ENCODE measurements at regions of chr1 and their contacts with region 1.

Region 1: GRCh38 chr1:198794498-198794897 is 155.7 kb downstream of the PTPRC start:
- DNase-seq: no peak
- H3K4me3 ChIP-seq: no peak overlapping the region
- H3K27ac ChIP-seq: no peak overlapping the region
- H3K4me1 ChIP-seq: no peaks in the 10 kb centered on the region
- H3K27me3 ChIP-seq: no peaks in the 10 kb centered on the region
- CTCF ChIP-seq: no peak
- EP300 ChIP-seq: no peak
- POLR2A ChIP-seq: no peak

Region 2: DNA sequence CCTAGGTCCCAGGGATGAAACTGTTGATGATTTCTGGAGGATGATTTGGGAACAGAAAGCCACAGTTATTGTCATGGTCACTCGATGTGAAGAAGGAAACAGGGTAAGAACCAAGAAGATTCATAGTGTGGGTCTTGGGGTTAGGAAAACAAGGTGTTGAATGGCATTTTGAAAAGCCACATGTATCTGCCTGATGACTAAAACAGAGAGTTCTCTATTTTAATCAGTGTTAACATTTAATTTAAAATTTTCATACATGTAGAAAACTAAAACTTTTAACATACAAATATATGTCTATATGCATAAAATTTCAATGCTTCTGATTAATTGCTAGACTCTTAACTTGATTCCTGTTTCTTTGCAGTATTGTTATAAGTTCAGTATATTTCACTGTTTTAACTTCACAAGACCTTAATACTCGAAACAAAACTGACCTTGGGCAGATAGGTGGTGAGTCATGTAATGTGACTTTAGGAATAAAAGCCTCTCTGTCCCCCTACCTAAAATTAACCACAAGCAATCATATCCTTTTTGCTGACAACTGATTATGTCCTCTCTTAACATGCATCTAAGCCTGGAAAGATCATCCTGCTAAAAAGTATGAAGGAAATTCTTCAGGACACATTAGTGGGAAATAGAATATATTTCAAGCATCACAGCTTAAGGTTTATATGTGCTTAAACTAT is 60.0 kb before region 1 on chr1:
- intact Hi-C with region 1: no loop called
- DNase-seq: no peak
- H3K4me3 ChIP-seq: no peak overlapping the region
- H3K27ac ChIP-seq: no peak overlapping the region
- H3K4me1 ChIP-seq: no peaks in the 10 kb centered on the region
- H3K27me3 ChIP-seq: no peaks in the 10 kb centered on the region
- CTCF ChIP-seq: no peak
- EP300 ChIP-seq: no peak
- POLR2A ChIP-seq: no peak

Region 3: GRCh38 chr1:198858033-198858432 is 63.5 kb after region 1 on chr1:
- intact Hi-C with region 1: no loop called
- DNase-seq: no peak
- H3K4me3 ChIP-seq: no peak overlapping the region
- H3K27ac ChIP-seq: no peak overlapping the region
- H3K4me1 ChIP-seq: no peaks in the 10 kb centered on the region
- H3K27me3 ChIP-seq: no peaks in the 10 kb centered on the region
- CTCF ChIP-seq: no peak
- EP300 ChIP-seq: no peak
- POLR2A ChIP-seq: no peak

Region 4: GRCh38 chr1:199545780-199546179 is 751.3 kb after region 1 on chr1:
- intact Hi-C with region 1: loop called in 1 of 4 experiments (anchors 5 kb)
- DNase-seq: no peak
- H3K4me3 ChIP-seq: no peak overlapping the region
- H3K27ac ChIP-seq: no peak overlapping the region
- H3K4me1 ChIP-seq: no peaks in the 10 kb centered on the region
- H3K27me3 ChIP-seq: no peaks in the 10 kb centered on the region
- CTCF ChIP-seq: no peak
- EP300 ChIP-seq: no peak
- POLR2A ChIP-seq: no peak

Measured in ovary (tissue), 10 donors.